ENCODE measurements at regions of chr2 and their contacts with region 1.

Region 1: DNA sequence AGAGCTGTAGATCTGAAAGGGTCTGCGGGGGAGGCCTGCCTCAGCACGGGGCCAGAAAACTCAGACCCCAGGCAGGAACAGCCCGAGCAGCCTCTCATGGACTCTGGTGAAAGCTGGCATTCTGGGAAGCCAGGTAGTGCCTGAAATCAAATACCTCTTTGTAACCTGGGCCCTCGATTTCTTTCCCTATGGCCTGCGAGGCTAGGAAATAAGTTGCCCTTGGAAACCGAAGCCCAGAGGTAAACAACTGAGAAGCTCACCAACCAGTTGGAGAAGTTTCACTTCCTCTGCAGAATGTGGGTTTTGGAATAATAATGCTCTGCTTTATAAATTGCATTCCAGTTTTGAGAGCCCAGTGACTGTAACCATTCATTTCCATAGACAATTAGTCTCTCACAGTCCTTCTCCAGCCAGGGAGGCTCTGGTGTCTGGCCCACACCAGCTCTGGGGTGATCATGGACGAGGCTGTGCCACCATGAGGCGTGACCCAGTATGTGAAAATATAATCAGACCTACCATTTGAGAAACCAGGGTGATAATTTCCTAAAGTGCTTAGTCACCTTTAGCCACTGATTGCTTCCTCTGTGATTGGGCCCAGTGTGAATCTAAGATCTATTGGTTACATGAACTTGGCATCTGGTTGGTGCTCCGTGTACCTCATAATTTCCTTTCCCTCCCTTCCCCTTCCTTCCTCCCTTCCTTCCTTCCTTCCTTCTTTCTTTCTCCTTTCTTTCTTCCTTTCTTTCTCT is 133.1 kb upstream of the PELI1 start:
- H3K4me3 Mint-ChIP-seq: peak overlapping the region; percentile 50
- H3K27ac Mint-ChIP-seq: peak overlapping the region; percentile 92
- H3K4me1 Mint-ChIP-seq: peaks cover 58% of the 10 kb centered on the region
- H3K27me3 Mint-ChIP-seq: no peaks in the 10 kb centered on the region

Region 2: GRCh38 chr2:64144057-64145013 is 132.9 kb before region 1 on chr2 and contains the start of gene PELI1:
- intact Hi-C with region 1: loop called (anchors 1 kb)
- H3K4me3 Mint-ChIP-seq: peak within 1 kb of the TSS; percentile 87
- H3K27ac Mint-ChIP-seq: peak within 1 kb of the TSS; percentile 93
- H3K4me1 Mint-ChIP-seq: peaks cover 26% of the 10 kb centered on the region
- H3K27me3 Mint-ChIP-seq: no peaks in the 10 kb centered on the region

Region 3: DNA sequence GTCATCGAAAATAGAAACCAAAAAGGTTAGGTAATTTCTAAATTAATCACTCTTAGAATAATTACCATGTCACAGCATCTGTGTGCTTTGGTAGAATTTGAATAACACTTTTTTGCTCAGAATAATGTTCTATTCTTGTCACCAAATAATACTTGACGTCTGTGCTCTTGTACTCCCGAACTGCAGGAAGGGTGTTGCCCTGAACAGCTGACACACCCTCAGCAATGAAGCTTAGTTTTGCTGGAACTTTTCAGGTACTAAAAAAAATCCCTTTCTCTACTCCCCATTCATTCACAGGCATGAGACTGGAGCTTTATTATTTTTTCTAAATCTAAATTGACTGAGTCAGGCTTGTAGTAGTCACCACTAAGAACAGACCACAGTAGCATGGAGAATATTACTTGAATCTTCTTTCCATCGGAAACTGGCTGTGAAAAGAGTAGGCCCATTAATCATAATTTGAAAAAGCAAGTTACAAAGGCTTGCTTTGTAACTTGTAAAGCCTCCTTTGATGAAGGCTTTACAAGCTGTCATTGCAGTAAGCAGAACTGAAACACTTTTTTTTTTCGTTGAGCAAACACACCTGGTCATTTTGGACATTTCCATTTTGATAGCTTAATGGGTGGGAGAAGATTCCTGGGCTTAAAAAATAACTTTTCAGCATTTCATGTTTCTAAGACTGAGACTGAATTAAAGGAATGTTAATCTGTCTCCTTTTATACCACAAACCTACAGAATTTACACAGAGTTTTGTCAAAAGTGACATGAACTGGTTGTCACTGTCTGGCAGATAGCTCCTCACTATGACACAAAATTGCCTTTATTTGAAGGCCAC is 62.8 kb before region 1 on chr2:
- intact Hi-C with region 1: loop called (anchors 5 kb)
- H3K4me3 Mint-ChIP-seq: no peak overlapping the region
- H3K27ac Mint-ChIP-seq: peak overlapping the region; percentile 56
- H3K4me1 Mint-ChIP-seq: peaks cover 46% of the 10 kb centered on the region
- H3K27me3 Mint-ChIP-seq: no peaks in the 10 kb centered on the region

Region 4: GRCh38 chr2:64260817-64261216 is 16.5 kb before region 1 on chr2:
- intact Hi-C with region 1: loop called (anchors 2 kb)
- H3K4me3 Mint-ChIP-seq: peak overlapping the region; percentile 50
- H3K27ac Mint-ChIP-seq: peak overlapping the region; percentile 84
- H3K4me1 Mint-ChIP-seq: peaks cover 45% of the 10 kb centered on the region
- H3K27me3 Mint-ChIP-seq: no peaks in the 10 kb centered on the region

Measured in dendritic cell treated with granulocyte-macrophage colony-stimulating factor and Interleukin-4, amounts not matched to agents 40 ng/mL and 50 ng/mL, for 4 days (primary cell).